ENCODE measurements at regions of chr5 and their contacts with region 1.

Region 1: GRCh38 chr5:80487829-80488721 is at the start of gene FAM151B:
- DNase-seq: peak; percentile 92
- ATAC-seq: peak; percentile 93
- total RNA-seq, gene FAM151B: 1.6 TPM

Region 2: DNA sequence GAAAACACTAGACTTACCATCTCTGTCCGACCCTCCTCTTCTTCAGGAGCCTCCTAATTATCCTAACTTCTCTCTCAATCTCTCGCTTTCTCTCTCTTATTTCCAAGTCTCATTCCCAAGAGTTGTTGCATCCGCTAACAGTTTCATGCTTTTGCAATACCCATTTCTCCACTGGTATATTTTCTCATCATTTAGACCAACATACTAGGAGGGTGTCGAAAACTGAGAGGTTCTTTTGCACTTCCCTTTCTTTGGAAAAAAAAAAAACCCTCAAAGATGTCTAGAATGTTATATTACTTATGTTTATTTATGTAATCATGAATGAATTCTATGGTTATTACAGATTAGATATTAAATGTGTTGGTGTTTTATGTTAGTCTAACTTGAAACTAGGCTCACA is 132.4 kb before region 1 on chr5:
- intact Hi-C with region 1: no loop called
- DNase-seq: no peak
- ATAC-seq: no peak

Region 3: DNA sequence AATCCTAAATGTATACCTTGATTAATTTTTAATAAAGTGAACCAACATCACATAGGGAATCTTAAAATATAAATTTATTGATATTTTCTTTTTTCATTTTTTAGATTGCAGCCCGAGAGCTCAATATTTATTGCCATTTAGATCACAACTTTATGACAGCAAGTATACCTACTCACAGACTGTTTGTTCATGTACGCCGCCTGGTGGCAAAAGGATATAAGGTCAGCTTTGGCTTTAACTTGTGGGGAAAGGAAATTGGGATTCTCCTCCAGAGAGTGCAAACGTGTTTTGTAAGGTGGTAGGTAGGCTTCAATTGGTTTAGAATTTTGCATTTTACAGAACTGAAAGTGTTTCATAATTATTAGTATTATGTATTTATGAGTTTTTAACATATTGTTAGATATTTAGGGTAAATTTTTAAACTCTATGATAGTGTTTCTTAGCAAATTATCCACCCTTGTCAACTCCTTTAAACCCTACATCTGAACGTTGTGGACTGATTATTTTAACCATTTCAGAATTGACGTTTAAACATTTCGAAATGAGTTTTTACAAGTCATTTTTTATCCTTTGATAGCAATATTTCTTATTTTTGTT is 184.2 kb after region 1 on chr5:
- intact Hi-C with region 1: loop called (anchors 2 kb)
- DNase-seq: peak; percentile 73
- ATAC-seq: peak; percentile 68